ENCODE measurements at regions of chr7 and their contacts with region 1.

Region 1: GRCh38 chr7:27108390-27109127 is 6.1 kb upstream of the HOXA2 start:
- DNase-seq: peak; percentile 76

Region 2: DNA sequence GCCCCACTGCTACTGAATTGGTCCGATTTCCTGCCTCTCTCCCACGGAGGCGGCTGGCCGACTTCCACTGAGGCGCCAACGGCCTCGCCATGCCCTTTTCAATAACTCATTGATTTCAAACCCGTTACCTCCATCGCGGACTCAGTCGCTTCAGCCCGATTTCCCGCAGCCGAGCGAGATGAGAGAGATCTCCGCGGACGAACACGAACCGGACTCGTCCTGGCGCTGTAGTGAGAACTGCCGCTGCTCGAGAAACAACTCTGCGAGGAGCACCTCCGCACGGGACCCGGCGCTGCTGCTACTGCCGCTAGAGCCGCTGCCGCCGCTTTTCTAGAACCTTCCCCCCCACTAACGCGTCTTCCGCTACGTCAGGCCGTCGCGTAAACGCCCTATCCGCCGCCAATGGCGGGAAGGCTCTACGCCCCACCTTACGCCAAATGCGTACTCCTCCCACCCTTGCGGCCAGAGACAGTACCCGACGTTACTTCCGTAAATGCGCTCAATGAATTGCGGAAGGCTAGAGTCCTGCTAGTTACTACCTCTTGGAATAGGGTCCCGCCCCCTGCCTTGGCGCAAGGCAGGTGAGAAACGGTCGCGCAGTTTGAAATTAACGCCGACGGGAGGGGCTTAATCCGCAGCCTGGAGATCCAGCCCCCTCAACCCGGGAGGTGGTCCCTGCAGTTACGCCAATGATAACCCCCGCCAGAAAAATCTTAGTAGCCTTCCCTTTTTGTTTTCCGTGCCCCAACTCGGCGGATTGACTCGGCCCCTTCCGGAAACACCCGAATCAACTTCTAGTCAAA is 907.9 kb before region 1 on chr7 and contains the start of gene HNRNPA2B1:
- intact Hi-C with region 1: loop called (anchors 10 kb)
- DNase-seq: peak; percentile 98
- total RNA-seq, gene HNRNPA2B1: 353 TPM